Activated T-helper 2 cell treated with anti-CD3 and anti-CD28 coated beads, Interferon-gamma antibody, Interleukin-2, Interleukin-4, amounts not matched to agents 10 μg/mL and 5 μg/mL and 100 μg/mL, durations not matched to agents 14 hours and 24 hours and 36 hours (primary cell): ENCODE measurements at regions of chr16 and their contacts with region 1.

Region 1: GRCh38 chr16:47732523-47733111 is 271.5 kb downstream of the PHKB start:
- DNase-seq: no peak
- H3K4me3 Mint-ChIP-seq: no peak overlapping the region
- H3K27ac Mint-ChIP-seq: peak overlapping the region; percentile 62
- H3K4me1 Mint-ChIP-seq: peaks cover 13% of the 10 kb centered on the region
- H3K27me3 Mint-ChIP-seq: peaks cover 14% of the 10 kb centered on the region

Region 2: DNA sequence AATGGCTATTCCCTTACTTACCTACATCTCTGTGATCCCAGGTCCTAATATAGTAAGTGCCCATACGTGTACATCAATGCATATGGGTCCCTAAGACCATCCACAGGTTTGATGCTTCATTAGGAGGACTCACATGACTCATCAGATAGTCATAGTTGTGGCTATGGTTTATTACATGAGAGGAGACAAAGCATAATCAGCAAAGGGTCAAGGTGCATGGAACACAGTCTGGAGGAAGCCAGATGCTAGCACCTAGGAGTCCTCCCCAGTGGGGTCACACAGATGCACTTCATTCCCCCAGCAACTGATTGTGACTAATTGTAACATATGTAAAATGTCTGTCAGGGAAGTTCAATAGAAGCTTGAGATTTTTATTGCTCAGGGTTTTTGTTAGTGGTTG is 228.7 kb before region 1 on chr16:
- intact Hi-C with region 1: no loop called
- DNase-seq: no peak
- H3K4me3 Mint-ChIP-seq: no peak overlapping the region
- H3K27ac Mint-ChIP-seq: no peak overlapping the region
- H3K4me1 Mint-ChIP-seq: no peaks in the 10 kb centered on the region
- H3K27me3 Mint-ChIP-seq: no peaks in the 10 kb centered on the region

Region 3: GRCh38 chr16:47779201-47780016 is 46.8 kb after region 1 on chr16:
- intact Hi-C with region 1: loop called (anchors 1 kb)
- DNase-seq: peak; percentile 8
- H3K4me3 Mint-ChIP-seq: peak overlapping the region; percentile 75
- H3K27ac Mint-ChIP-seq: peak overlapping the region; percentile 80
- H3K4me1 Mint-ChIP-seq: peaks cover 14% of the 10 kb centered on the region
- H3K27me3 Mint-ChIP-seq: no peaks in the 10 kb centered on the region

Region 4: GRCh38 chr16:48091117-48091516 is 358.5 kb after region 1 on chr16:
- intact Hi-C with region 1: no loop called
- DNase-seq: no peak
- H3K4me3 Mint-ChIP-seq: no peak overlapping the region
- H3K27ac Mint-ChIP-seq: no peak overlapping the region
- H3K4me1 Mint-ChIP-seq: no peaks in the 10 kb centered on the region
- H3K27me3 Mint-ChIP-seq: peaks cover 4% of the 10 kb centered on the region